ENCODE measurements at regions of chr17 and their contacts with region 1.

Region 1: DNA sequence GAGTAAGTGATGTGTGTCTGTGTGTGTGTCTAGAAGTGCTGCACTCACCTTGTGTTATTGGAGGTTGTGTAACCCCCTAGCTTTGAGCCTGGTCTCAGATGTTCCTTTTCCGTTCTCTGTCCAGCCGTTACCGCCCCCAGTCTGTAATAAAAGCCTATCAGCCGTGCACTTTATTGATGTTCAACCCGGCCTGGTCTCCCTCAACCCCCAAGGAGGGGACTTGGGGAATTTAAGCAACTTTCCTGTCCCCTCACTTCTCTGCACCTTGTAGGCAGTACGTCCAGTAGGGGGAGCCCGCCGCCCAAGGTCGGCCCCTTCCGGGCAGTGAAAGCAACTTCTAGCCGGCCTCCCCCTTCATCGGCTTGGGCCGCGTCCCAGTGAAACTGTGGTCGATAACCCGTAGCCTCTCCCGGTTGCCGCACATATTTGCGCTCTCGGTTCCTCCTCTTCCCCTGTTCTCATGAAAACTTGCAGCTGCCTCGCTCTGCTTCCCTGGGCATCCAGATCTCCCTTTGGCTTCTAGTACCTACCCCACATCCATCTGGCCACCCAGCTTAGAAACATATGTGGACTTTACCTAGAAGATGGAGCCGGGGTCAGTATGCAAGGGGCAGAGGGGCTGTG is 7.9 kb downstream of the PNPO start:
- DNase-seq: peak; percentile 77
- H3K4me3 ChIP-seq: no peak overlapping the region
- H3K27ac ChIP-seq: no peak overlapping the region
- H3K4me1 ChIP-seq: peaks cover 4% of the 10 kb centered on the region
- H3K27me3 ChIP-seq: no peaks in the 10 kb centered on the region
- CTCF ChIP-seq: peak; percentile 90 to 95
- POLR2A ChIP-seq: no peak

Region 2: DNA sequence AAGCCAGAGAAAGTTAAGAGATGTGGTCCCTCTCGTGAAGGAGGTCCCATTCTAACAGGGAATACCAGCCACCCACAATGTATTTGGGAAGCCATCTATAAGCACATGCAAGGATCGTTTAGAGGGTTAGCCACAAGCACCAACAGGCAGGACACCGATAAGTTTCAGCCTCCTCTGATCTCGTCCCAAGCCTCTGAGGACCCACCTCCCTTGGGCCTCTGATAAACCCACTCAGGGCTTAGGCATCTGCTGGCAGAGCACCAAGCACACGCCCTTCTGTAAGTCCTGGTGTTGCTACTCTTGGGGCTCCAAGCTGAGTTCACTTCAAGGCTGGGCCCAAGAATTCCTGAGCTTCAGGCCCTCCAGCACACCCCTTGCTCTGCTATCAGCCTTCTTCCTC is 13.3 kb before region 1 on chr17:
- CTCF ChIA-PET with region 1: interaction called, 22 read pairs
- POLR2A ChIA-PET with region 1: no interaction called
- dilution Hi-C with region 1: no loop called
- intact Hi-C with region 1: no loop called
- DNase-seq: peak; percentile 14
- H3K4me3 ChIP-seq: no peak overlapping the region
- H3K27ac ChIP-seq: no peak overlapping the region
- H3K4me1 ChIP-seq: peaks cover 9% of the 10 kb centered on the region
- H3K27me3 ChIP-seq: no peaks in the 10 kb centered on the region
- CTCF ChIP-seq: no peak
- POLR2A ChIP-seq: no peak

Region 3: GRCh38 chr17:47970704-47971463 is 21.6 kb after region 1 on chr17 and contains the start of gene CDK5RAP3:
- CTCF ChIA-PET with region 1: interaction called, 64 read pairs
- POLR2A ChIA-PET with region 1: no interaction called
- dilution Hi-C with region 1: no loop called
- intact Hi-C with region 1: loop called (anchors 1 kb)
- DNase-seq: peak; percentile 100
- H3K4me3 ChIP-seq: peak within 1 kb of the TSS; percentile 9 to 86 (median 55)
- H3K27ac ChIP-seq: peak within 1 kb of the TSS; percentile 48
- H3K4me1 ChIP-seq: peaks cover 6% of the 10 kb centered on the region
- H3K27me3 ChIP-seq: no peaks in the 10 kb centered on the region
- CTCF ChIP-seq: peak; percentile 97 to 99
- POLR2A ChIP-seq: peak; percentile 81
- total RNA-seq, gene CDK5RAP3: 109 and 122 TPM in 2 replicates

Region 4: GRCh38 chr17:47978324-47978723 is 29.1 kb after region 1 on chr17:
- CTCF ChIA-PET with region 1: interaction called, 14 read pairs
- POLR2A ChIA-PET with region 1: no interaction called
- dilution Hi-C with region 1: no loop called
- intact Hi-C with region 1: loop called (anchors 2 kb)
- DNase-seq: peak; percentile 48
- H3K4me3 ChIP-seq: no peak overlapping the region
- H3K27ac ChIP-seq: no peak overlapping the region
- H3K4me1 ChIP-seq: no peaks in the 10 kb centered on the region
- H3K27me3 ChIP-seq: no peaks in the 10 kb centered on the region
- CTCF ChIP-seq: peak; percentile 75 to 83
- POLR2A ChIP-seq: no peak

Region 5: DNA sequence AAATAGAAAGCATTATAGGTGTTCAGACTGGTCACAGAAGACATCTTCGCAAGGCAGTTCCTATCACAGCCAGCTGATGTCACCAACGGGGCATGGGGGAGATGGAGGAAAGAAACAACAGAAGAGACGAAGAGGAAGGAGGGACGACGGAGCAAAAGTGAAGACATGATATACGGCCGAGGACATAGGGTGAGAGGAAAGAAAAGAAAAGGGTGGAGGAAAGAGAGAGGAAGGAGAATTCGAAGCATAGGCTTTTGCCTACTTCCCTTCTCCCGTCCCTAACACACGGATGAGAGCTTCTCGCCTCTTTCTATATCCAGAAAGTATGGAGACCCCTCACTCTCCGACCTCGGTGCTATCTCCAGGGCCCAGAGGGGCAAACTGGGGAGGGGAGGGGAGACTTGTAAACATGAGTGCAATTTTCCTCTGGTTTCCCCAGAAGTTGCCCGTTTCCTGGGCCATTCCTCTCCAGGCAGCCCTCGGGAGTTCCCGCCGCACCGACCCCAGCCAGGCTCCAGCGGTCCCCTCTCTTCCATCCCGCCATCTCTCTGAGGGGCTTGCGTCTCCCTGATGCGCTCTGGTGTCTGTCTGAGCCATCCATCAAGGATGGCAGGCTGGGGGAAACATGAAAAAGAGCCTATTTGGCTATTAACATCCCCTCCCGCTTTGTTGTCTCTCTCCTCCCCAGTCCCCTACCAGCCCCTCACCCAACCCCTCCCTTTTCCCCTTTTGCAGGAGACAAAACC is 62.3 kb after region 1 on chr17:
- CTCF ChIA-PET with region 1: interaction called, 134 read pairs
- POLR2A ChIA-PET with region 1: no interaction called
- dilution Hi-C with region 1: no loop called
- intact Hi-C with region 1: no loop called
- DNase-seq: peak; percentile 43
- H3K4me3 ChIP-seq: peak overlapping the region; percentile 31 to 64 (median 61)
- H3K27ac ChIP-seq: no peak overlapping the region
- H3K4me1 ChIP-seq: peaks cover 9% of the 10 kb centered on the region
- H3K27me3 ChIP-seq: peaks cover 0 to 2% of the 10 kb centered on the region in 2 experiments
- CTCF ChIP-seq: peak; percentile 36 to 49
- POLR2A ChIP-seq: no peak